Natural killer cell (primary cell): ENCODE measurements at regions of chr2 and their contacts with region 1.

Region 1: DNA sequence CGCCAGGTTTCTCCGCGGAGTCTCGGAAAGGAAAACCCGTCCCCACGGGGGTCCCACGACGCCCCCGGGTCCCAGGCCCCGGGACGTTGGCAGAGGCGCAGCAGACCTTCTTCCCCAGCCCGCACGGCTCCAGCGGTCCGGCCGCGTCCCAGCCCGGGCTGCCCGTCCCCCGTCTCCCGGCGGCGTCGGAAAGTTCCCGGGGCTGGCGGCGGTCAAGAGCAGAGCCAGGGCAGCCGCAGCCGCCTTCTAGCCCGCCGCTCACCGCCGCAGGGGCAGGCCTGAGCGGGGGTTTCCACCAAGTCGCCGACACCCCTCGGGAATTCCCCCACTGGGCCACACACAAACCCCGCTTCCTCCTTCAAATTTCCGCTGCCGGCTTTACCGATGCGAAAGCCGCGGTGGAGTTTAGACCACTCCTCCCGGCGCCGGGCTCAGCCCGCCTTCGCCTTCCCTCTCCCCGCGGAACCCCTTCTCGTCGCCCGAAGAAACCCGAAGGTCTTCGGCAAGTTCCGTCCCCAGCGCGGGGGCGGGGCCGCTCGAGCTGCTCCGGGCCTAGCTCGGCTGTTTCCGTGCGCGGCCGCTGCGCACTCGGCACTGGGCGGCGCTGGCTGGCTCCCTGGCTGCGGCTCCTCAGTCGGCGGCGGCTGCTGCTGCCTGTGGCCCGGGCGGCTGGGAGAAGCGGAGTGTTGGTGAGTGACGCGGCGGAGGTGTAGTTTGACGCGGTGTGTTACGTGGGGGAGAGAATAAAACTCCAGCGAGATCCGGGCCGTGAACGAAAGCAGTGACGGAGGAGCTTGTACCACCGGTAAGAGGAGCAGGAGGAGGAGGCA is at the start of gene CREB1:
- DNase-seq: peak; percentile 99 to 100
- ATAC-seq: peak; percentile 74 to 90 (median 75)
- H3K4me3 ChIP-seq: peak within 1 kb of the TSS; percentile 92
- H3K4me3 Mint-ChIP-seq: peak within 1 kb of the TSS; percentile 94
- H3K27ac ChIP-seq: peak within 1 kb of the TSS; percentile 99
- H3K27ac Mint-ChIP-seq: peak within 1 kb of the TSS; percentile 92 to 96
- H3K4me1 ChIP-seq: peaks cover 32% of the 10 kb centered on the region
- H3K4me1 Mint-ChIP-seq: peaks cover 47 to 56% of the 10 kb centered on the region in 2 donors
- H3K27me3 ChIP-seq: no peaks in the 10 kb centered on the region
- H3K27me3 Mint-ChIP-seq: no peaks in the 10 kb centered on the region
- CTCF ChIP-seq: no peak
- total RNA-seq, gene CREB1: 88.1 to 107 (median 106) TPM

Region 2: GRCh38 chr2:207166039-207166348 is 363.6 kb before region 1 on chr2:
- intact Hi-C with region 1: loop called (anchors 5 kb)
- DNase-seq: peak; percentile 92 to 96
- ATAC-seq: peak; percentile 88 to 97 (median 94)
- H3K4me3 ChIP-seq: peak overlapping the region; percentile 74
- H3K4me3 Mint-ChIP-seq: peak overlapping the region; percentile 99
- H3K27ac ChIP-seq: peak overlapping the region; percentile 95
- H3K27ac Mint-ChIP-seq: peak overlapping the region; percentile 92 to 99
- H3K4me1 ChIP-seq: peaks cover 18% of the 10 kb centered on the region
- H3K4me1 Mint-ChIP-seq: peaks cover 45 to 56% of the 10 kb centered on the region in 2 donors
- H3K27me3 ChIP-seq: no peaks in the 10 kb centered on the region
- H3K27me3 Mint-ChIP-seq: peaks cover 0 to 25% of the 10 kb centered on the region in 2 donors
- CTCF ChIP-seq: no peak

Region 3: DNA sequence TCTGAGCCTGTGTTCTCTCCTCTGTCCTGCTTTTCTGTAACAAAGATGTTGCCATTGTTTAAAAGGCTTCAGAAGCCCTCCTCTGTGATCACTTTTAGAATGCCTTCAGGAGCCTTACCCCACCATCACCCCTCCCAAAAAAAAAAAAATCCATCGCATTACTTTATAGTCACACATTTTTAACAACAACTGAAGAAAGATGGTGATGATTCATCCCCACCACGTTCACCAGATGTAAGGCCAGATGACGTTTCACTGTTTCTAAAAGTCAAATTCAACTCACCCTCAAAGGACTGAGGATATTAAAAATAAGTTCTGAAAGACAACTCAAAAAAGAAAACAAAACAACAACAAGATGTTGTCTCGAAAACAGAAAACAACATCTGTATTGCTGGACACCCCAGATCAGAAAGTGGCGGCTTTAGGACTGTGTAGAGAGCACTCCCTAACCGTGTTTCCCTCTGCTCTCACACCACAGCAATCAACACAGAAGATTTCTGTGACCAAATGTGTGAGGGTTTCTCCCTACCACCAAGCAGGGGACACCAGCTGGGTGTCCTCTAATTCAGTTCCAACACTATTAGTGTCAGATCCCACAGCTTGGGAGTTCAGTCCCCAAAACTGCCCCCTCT is 61.7 kb before region 1 on chr2:
- intact Hi-C with region 1: loop called (anchors 2 kb)
- DNase-seq: peak in 1 of 2 donors; percentile 29
- ATAC-seq: peak; percentile 73 to 83 (median 82)
- H3K4me3 ChIP-seq: no peak overlapping the region
- H3K4me3 Mint-ChIP-seq: peak overlapping the region; percentile 11
- H3K27ac ChIP-seq: no peak overlapping the region
- H3K27ac Mint-ChIP-seq: peak overlapping the region; percentile 32 to 87
- H3K4me1 ChIP-seq: peaks cover 3% of the 10 kb centered on the region
- H3K4me1 Mint-ChIP-seq: peaks cover 11 to 27% of the 10 kb centered on the region in 2 donors
- H3K27me3 ChIP-seq: no peaks in the 10 kb centered on the region
- H3K27me3 Mint-ChIP-seq: peaks cover 5 to 8% of the 10 kb centered on the region in 2 donors
- CTCF ChIP-seq: no peak

Region 4: DNA sequence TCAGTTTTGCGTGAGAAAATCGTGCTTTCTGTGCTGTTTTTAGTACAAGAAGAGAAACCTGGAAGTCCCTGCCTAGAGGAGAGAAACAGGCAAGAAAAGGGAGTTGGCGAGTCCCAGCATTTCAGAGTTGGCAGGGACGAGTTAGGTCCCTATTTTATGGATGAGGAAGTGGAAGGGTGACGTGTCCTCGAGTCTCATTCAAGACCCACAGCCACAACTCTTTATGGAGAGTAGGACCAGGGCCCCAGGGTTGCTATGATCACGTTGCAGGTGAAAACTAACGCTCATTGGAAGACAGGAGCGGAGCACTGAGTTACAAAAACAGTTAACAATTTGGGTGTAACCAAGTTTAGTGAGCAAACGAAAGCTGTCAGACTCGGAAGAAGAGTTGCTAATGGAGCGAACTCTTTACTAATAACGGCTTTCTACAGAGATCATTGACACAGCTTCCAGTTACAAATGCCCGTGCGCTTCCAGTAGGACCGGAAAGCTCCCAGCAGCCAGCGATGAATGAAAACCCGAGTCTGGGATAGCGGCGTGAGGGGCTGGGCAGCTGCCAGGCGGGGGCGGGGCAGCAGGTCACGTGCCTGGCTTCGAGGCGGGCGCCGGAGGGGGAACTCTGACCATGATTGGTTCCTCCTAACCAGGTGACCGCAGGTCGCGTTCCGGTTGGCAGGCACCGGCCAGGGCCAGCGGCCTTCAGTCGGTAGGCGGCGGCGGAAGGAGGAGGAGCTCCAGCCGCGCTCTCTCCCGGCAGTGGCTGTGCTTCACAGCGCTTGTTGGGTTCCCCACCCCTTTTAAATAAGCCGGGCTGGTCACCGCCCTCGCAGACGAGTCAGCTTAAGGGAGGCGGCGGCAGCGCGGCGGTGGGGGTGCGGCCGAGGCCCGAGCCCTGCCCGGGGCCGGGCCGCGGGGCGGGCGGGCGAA is 181.5 kb after region 1 on chr2 and contains the start of gene CCNYL1:
- intact Hi-C with region 1: loop called (anchors 1 kb)
- DNase-seq: peak; percentile 97 to 98
- ATAC-seq: peak; percentile 95 to 99 (median 95)
- H3K4me3 ChIP-seq: peak within 1 kb of the TSS; percentile 86
- H3K4me3 Mint-ChIP-seq: peak within 1 kb of the TSS; percentile 96
- H3K27ac ChIP-seq: peak within 1 kb of the TSS; percentile 71
- H3K27ac Mint-ChIP-seq: peak within 1 kb of the TSS; percentile 84 to 92
- H3K4me1 ChIP-seq: peaks cover 18% of the 10 kb centered on the region
- H3K4me1 Mint-ChIP-seq: peaks cover 21 to 26% of the 10 kb centered on the region in 2 donors
- H3K27me3 ChIP-seq: no peaks in the 10 kb centered on the region
- H3K27me3 Mint-ChIP-seq: peaks cover 0 to 8% of the 10 kb centered on the region in 2 donors
- CTCF ChIP-seq: no peak
- total RNA-seq, gene CCNYL1: 7.9 to 11.7 (median 10.2) TPM